Right ventricle myocardium superior (tissue), 1 donor: ENCODE measurements at regions of chr5 and their contacts with region 1.

Region 1: DNA sequence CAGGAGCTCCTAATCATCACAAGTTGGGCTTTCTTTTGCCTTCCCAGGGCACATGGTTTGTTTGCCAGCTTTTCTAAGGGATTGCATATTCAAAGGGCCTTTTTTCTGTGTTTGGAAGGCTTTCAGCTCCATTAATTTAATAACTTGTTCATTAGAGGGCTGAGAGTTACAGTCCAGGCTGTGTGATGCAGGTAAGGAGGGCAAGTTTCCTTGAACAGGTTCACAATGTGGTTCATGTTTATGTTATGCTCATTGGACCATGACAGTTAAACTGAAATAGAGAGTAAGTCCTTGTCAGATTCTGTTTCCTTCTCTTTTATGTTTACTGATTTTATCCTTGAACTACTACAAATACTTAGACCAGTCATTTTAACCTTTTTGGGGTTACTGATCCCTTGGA is 174.4 kb downstream of the MARCHF11 start:
- DNase-seq: no peak
- ATAC-seq: no peak

Region 2: DNA sequence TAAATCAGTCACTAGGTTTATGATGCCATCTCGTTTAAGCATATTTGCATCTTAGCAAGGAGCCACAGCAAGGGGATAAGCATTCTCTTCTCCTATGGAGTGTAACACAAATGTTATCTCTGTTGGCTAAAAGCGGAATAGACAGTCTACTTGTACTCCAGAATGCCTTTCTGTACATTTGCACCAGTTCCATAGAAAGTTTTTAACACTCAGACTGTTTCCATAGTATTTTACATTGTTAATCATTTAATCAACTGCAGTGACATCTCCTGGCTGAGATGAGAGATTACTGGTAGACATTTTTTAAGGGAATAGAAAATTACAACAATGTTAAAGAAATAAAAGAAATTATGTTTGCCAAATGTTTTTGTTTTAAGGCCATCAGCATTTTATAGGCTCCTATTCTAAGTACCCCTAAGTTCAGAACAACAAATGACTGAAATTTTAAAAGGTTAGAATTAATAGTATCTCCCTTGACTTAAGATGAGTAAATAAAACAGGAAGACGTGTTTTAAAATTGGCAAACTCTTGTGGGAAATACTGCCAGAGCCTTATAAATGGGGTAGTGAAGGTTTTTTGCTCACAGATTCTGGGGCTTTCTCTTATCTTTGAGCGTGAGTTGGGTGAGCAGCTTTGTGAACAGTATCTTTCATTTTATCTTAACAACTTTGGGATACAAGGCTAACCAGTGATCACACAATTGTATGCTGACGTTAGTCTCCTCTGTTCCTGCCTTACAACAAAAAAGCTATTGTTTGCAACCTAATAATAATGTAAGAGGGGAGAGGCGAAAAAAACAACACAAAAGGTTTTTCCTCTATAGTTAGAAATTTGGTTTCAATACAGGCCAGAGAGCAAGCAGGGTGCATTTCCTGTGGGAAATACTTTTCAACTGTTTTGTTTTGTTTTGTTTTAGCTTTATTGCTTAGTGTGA is 210.9 kb before region 1 on chr5:
- intact Hi-C with region 1: no loop called
- DNase-seq: no peak
- ATAC-seq: no peak

Region 3: GRCh38 chr5:16135003-16135402 is 129.8 kb after region 1 on chr5:
- intact Hi-C with region 1: loop called (anchors 10 kb)
- DNase-seq: no peak
- ATAC-seq: peak; percentile 18